ENCODE measurements at regions of chr2 and their contacts with region 1.

Region 1: DNA sequence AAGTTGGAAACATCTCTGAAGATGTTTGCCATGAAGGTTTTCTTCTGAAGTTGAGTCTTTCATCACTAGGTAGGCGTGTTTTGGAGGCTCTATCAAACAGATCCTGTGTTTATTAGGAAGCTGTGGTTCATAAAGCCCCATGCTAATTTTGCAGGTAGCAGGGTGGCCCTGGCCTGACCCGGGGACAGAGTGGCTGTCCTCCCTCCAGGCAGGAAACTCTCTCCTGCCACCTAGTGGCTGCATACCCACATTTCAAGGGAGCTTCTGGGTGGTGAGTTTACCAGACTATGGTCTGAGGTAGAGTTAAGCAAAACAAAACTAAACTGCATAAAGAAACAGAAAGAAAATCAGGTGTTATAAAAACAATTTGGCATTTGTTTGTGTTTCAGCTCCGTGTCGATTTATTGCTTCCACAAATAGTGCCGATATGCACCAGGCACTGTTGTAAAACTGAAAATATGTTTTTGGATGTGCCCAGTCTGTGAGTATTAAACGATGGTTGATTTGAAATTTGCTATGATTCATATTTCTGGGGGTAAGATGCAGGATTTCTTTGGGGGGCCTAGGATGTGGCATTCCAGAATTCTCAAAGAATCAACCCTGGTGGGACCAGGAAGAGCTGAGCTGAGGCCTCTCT is 26.0 kb upstream of the IL37 start:
- DNase-seq: peak; percentile 86
- H3K4me3 Mint-ChIP-seq: no peak overlapping the region
- H3K27ac Mint-ChIP-seq: no peak overlapping the region
- H3K4me1 Mint-ChIP-seq: peaks cover 12% of the 10 kb centered on the region
- H3K27me3 Mint-ChIP-seq: no peaks in the 10 kb centered on the region

Region 2: GRCh38 chr2:112054847-112055729 is 829.9 kb before region 1 on chr2 and contains the start of gene TMEM87B:
- CTCF ChIA-PET with region 1: no interaction called
- intact Hi-C with region 1: no loop called
- DNase-seq: peak; percentile 99
- H3K4me3 Mint-ChIP-seq: peak within 1 kb of the TSS; percentile 97
- H3K27ac Mint-ChIP-seq: peak within 1 kb of the TSS; percentile 99
- H3K4me1 Mint-ChIP-seq: peaks cover 42% of the 10 kb centered on the region
- H3K27me3 Mint-ChIP-seq: no peaks in the 10 kb centered on the region
- total RNA-seq, gene TMEM87B: 10.5 to 12.0 TPM

Region 3: DNA sequence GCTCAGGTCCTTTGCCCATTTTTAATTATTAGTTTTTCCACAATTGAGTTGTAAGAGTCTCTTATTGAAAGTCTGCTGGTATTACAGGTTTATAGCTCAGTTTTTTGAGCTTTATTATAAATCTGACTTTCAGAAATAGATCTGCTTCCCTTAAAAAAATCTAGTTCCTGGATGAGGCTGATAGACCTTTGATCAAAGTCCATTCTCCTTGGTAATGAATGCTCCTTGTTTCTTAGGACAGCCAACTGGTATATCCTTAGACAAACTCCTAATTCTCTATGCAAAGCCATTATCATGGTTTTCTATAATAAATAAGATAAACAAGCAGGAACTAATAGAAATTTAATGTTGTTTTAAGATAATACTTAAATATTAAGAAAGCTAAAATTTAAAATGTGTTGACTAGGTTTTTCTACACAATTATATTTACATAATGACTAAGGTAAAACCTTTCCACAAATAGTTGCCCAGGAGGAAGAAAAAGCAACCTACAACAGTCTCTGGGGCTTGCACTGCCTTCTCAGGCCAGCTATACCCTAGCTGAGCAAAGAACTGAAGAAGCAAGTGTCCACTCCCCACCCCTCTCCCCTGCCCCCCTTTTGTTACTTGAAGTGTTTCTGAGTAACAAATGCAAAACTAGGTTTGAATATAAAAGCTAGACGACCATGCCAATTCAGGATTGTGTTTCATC is 147.3 kb before region 1 on chr2:
- CTCF ChIA-PET with region 1: interaction called, 10 read pairs
- intact Hi-C with region 1: no loop called
- DNase-seq: no peak
- H3K4me3 Mint-ChIP-seq: no peak overlapping the region
- H3K27ac Mint-ChIP-seq: no peak overlapping the region
- H3K4me1 Mint-ChIP-seq: no peaks in the 10 kb centered on the region
- H3K27me3 Mint-ChIP-seq: no peaks in the 10 kb centered on the region

Region 4: GRCh38 chr2:112749755-112750559 is 135.0 kb before region 1 on chr2:
- CTCF ChIA-PET with region 1: interaction called, 118 read pairs
- intact Hi-C with region 1: loop called (anchors 1 kb)
- DNase-seq: peak; percentile 90
- H3K4me3 Mint-ChIP-seq: no peak overlapping the region
- H3K27ac Mint-ChIP-seq: no peak overlapping the region
- H3K4me1 Mint-ChIP-seq: peaks cover 10% of the 10 kb centered on the region
- H3K27me3 Mint-ChIP-seq: no peaks in the 10 kb centered on the region

Region 5: DNA sequence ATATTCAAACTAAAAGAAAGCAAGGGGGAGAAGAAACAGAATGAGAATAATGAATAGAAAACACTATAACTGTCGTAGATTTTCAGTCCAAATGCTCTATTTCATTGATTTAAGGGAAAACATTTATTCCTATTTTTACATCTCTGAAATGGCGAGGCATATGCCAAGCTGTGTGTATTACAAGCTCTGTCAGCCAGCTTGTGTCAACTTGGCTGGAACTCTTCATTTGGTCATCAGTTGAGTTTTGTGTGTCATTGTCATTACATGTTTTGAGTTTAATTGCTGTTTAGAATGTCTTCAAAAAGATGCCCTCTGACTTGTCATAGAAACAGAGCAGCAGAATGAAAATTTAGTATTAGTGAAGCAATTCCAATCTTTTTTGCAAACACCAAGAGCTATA is 17.8 kb after region 1 on chr2:
- CTCF ChIA-PET with region 1: interaction called, 12 read pairs
- intact Hi-C with region 1: no loop called
- DNase-seq: no peak
- H3K4me3 Mint-ChIP-seq: no peak overlapping the region
- H3K27ac Mint-ChIP-seq: no peak overlapping the region
- H3K4me1 Mint-ChIP-seq: no peaks in the 10 kb centered on the region
- H3K27me3 Mint-ChIP-seq: no peaks in the 10 kb centered on the region

Region 6: DNA sequence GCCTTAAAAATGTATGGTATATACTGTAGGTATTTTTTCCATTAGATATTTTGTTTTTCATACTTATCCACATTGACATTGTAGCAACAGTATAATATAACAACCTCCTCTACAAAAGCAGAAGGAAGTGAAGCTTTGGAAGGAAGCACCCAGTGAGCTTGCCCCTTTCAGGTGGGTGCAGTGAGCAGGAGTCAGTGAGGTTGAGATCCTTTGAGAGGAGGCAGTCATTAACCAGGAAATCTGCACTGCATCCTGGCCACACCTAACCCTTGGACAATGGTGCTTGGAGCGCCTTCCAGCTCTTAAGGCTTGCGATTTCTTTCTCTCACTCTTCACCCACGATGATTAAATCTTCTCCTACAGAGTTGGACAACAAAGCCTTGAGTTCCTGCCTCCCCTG is 39.8 kb after region 1 on chr2:
- CTCF ChIA-PET with region 1: interaction called, 14 read pairs
- intact Hi-C with region 1: no loop called
- DNase-seq: no peak
- H3K4me3 Mint-ChIP-seq: no peak overlapping the region
- H3K27ac Mint-ChIP-seq: no peak overlapping the region
- H3K4me1 Mint-ChIP-seq: no peaks in the 10 kb centered on the region
- H3K27me3 Mint-ChIP-seq: no peaks in the 10 kb centered on the region

Region 7: DNA sequence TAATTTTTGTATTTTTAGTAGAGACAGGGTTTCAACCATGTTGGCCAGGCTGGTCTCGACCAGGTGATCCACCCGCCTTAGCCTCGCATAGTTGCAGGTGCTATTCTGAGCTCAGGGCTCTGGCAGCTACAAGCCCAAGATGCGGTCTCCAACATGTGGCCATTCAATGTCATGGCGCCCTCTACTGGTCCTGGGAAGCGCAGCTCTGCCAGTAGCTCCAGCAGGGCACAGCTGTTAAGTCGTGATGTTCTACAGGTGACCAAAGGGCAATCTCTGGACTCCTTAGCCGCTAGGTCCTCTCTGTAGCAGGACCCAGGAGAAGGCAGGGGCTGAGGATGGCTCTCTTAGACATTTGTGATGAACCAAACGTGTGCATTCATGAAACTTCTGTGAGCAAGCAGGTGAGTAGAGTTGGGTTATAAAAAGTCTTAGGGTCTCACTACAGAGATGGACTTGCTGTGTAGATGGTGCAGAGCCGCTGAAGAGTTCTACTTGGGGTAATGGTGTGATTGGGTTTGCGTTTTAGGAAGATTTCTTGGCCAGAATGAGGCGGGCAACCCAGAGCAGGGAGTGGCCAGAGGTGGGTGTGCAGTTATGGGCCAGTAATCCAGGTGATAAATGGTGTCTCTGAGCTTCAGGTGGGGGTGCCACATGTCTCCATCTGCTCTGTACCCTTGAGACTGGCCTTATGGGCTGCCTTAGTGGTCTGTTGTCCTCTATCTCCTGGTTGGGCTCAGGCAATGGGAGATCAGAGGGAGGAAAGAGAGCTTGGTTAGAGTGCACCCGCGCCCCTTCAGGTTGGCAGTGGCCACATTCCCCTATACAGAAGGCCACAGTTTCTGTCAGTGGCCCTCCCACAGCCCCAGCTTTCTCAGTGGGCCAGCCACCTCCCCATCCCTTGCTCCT is 57.0 kb after region 1 on chr2:
- CTCF ChIA-PET with region 1: interaction called, 19 read pairs
- intact Hi-C with region 1: loop called (anchors 5 kb)
- DNase-seq: peak; percentile 88
- H3K4me3 Mint-ChIP-seq: no peak overlapping the region
- H3K27ac Mint-ChIP-seq: no peak overlapping the region
- H3K4me1 Mint-ChIP-seq: no peaks in the 10 kb centered on the region
- H3K27me3 Mint-ChIP-seq: no peaks in the 10 kb centered on the region

Region 8: DNA sequence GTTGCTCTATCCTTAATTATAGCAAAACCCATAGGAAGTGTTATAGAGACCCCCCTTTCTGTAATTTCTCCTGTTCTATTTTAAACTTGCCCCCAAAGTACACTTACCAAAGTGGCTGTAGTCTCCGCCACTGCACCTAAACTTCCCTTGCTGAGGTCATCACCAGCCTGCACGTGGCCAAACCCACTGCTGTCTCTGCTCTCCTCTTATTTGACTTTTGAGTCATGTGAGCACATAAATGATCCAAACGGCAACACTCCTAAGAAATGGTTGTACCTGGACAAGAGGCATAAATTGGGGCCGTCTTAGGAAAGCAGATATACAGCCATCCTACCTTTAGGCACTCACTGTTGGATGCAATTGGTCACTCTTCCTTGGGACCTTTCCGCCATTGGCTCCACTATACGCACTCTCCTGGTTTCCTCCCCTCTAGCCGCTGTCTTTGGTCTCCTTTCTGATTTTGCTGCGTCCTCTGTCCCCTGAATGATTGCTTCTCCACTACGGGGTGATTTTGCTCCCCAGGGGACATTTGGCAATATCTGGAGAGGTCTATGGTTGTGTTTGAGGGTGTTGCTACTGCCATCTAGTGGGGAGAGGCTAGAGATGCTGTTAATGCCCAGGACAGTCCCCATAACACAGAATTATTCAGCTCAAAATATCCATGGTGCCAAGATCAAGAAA is 73.6 kb after region 1 on chr2:
- CTCF ChIA-PET with region 1: interaction called, 10 read pairs
- intact Hi-C with region 1: no loop called
- DNase-seq: peak; percentile 54
- H3K4me3 Mint-ChIP-seq: no peak overlapping the region
- H3K27ac Mint-ChIP-seq: no peak overlapping the region
- H3K4me1 Mint-ChIP-seq: no peaks in the 10 kb centered on the region
- H3K27me3 Mint-ChIP-seq: no peaks in the 10 kb centered on the region

Region 9: DNA sequence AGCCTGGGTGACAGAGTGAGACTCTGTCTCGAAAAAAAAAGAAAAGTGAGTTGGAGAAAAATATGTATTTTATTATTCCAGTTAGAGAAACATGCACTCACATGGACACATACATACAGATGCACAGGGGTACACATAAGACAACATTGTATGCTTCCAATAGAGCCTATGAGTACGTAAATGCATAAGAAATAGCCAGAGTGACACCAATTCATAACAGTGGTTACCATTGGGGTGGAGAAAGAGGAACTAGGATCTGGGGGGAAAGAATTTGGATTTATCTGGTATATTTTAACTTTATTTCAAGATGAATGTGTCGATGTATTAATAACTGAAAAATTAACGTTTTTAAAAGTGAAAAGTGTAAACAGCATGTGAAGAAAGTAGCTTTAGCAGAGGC is 136.3 kb after region 1 on chr2:
- CTCF ChIA-PET with region 1: no interaction called
- intact Hi-C with region 1: no loop called
- DNase-seq: no peak
- H3K4me3 Mint-ChIP-seq: no peak overlapping the region
- H3K27ac Mint-ChIP-seq: no peak overlapping the region
- H3K4me1 Mint-ChIP-seq: peaks cover 4% of the 10 kb centered on the region
- H3K27me3 Mint-ChIP-seq: no peaks in the 10 kb centered on the region

Region 10: DNA sequence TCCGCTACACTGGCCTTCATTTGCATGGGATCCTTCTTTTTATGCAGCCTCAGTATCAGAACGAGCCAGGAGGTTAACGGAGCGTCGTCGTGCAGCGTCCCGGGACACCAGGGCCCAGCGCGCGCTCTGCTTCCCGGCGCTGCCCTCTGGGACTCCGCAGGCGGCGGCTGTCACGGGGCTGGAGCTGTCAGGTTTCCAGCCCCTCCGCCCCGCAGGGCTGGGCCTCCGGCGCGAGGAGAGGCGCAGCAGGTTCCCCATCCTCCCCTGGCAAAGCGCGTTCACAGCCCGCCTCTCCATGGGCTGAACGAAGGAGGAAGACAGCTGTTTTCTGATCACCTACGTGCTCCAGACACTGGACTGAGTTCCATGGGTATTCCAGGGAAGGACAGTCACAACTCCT is 406.2 kb after region 1 on chr2:
- CTCF ChIA-PET with region 1: no interaction called
- intact Hi-C with region 1: no loop called
- DNase-seq: no peak
- H3K4me3 Mint-ChIP-seq: no peak overlapping the region
- H3K27ac Mint-ChIP-seq: no peak overlapping the region
- H3K4me1 Mint-ChIP-seq: no peaks in the 10 kb centered on the region
- H3K27me3 Mint-ChIP-seq: no peaks in the 10 kb centered on the region